PC-9 (cell line): ENCODE measurements at regions of chr11 and their contacts with region 1.

Region 1: GRCh38 chr11:87352759-87353707 is 315.3 kb downstream of the TMEM135 start:
- DNase-seq: peak; percentile 62 to 79
- H3K4me3 ChIP-seq: no peak overlapping the region
- H3K27ac ChIP-seq: no peak overlapping the region
- H3K4me1 ChIP-seq: no peaks in the 10 kb centered on the region
- H3K27me3 ChIP-seq: no peaks in the 10 kb centered on the region
- CTCF ChIP-seq: peak; percentile 99

Region 2: GRCh38 chr11:87421422-87421821 is 68.4 kb after region 1 on chr11:
- CTCF ChIA-PET with region 1: interaction called, 6 read pairs
- POLR2A ChIA-PET with region 1: no interaction called
- intact Hi-C with region 1: loop called (anchors 2 kb)
- DNase-seq: peak in 1 of 2 experiments; percentile 59
- H3K4me3 ChIP-seq: no peak overlapping the region
- H3K27ac ChIP-seq: no peak overlapping the region
- H3K4me1 ChIP-seq: no peaks in the 10 kb centered on the region
- H3K27me3 ChIP-seq: no peaks in the 10 kb centered on the region
- CTCF ChIP-seq: peak; percentile 86

Region 3: DNA sequence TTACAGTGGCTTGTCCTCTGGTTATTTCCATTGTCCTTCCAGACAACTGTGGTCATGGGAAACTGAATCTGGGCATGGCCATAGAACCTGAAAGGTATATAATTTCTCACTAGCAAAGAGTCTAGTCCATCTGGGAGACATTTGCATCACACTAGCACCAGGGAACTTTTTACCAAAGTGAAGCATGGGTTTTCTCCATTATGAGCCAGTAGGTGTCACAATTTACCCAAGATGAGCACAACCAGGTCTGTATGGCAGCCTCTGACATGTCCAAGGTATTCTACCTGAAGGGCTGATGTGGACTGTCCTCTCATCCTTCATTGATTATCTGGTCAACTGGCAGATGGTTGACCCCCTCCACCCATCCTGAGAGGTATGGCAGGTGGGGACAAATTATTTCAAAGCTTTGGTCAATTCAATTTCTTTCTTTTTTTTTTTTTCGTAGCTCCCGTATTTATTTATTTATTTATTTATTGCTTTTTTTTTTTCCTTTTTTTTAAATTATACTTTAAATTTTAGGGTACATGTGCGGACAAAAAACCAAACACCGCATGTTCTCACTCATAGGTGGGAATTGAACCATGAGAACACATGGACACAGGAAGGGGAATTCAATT is 110.6 kb after region 1 on chr11:
- CTCF ChIA-PET with region 1: interaction called, 5 read pairs
- POLR2A ChIA-PET with region 1: no interaction called
- intact Hi-C with region 1: loop called (anchors 5 kb)
- DNase-seq: peak in 1 of 2 experiments; percentile 3
- H3K4me3 ChIP-seq: no peak overlapping the region
- H3K27ac ChIP-seq: no peak overlapping the region
- H3K4me1 ChIP-seq: no peaks in the 10 kb centered on the region
- H3K27me3 ChIP-seq: no peaks in the 10 kb centered on the region
- CTCF ChIP-seq: peak; percentile 66

Region 4: GRCh38 chr11:87722756-87723565 is 369.9 kb after region 1 on chr11:
- CTCF ChIA-PET with region 1: no interaction called
- POLR2A ChIA-PET with region 1: no interaction called
- intact Hi-C with region 1: loop called (anchors 5 kb)
- DNase-seq: peak; percentile 10 to 28
- H3K4me3 ChIP-seq: no peak overlapping the region
- H3K27ac ChIP-seq: no peak overlapping the region
- H3K4me1 ChIP-seq: no peaks in the 10 kb centered on the region
- H3K27me3 ChIP-seq: no peaks in the 10 kb centered on the region
- CTCF ChIP-seq: peak; percentile 78

Region 5: GRCh38 chr11:87878373-87878779 is 525.3 kb after region 1 on chr11:
- CTCF ChIA-PET with region 1: no interaction called
- POLR2A ChIA-PET with region 1: no interaction called
- intact Hi-C with region 1: loop called (anchors 5 kb)
- DNase-seq: peak in 1 of 2 experiments; percentile 4
- H3K4me3 ChIP-seq: no peak overlapping the region
- H3K27ac ChIP-seq: no peak overlapping the region
- H3K4me1 ChIP-seq: no peaks in the 10 kb centered on the region
- H3K27me3 ChIP-seq: no peaks in the 10 kb centered on the region
- CTCF ChIP-seq: peak; percentile 77